Ascending aorta (tissue), 2 donors: ENCODE measurements at regions of chr2 and their contacts with region 1.

Region 1: GRCh38 chr2:195656859-195657633 is at the start of gene SLC39A10:
- DNase-seq: peak; percentile 94 to 99
- H3K4me3 ChIP-seq: peak within 1 kb of the TSS; percentile 83 to 89
- H3K27ac ChIP-seq: peak within 1 kb of the TSS; percentile 97 to 98
- H3K4me1 ChIP-seq: peaks cover 0 to 9% of the 10 kb centered on the region in 2 donors
- H3K27me3 ChIP-seq: no peaks in the 10 kb centered on the region
- CTCF ChIP-seq: peak in 1 of 3 experiments; percentile 4
- total RNA-seq, gene SLC39A10: 9.9 TPM

Region 2: GRCh38 chr2:195304310-195304709 is 352.7 kb before region 1 on chr2:
- intact Hi-C with region 1: no loop called
- DNase-seq: no peak
- H3K4me3 ChIP-seq: no peak overlapping the region
- H3K27ac ChIP-seq: no peak overlapping the region
- H3K4me1 ChIP-seq: no peaks in the 10 kb centered on the region
- H3K27me3 ChIP-seq: no peaks in the 10 kb centered on the region
- CTCF ChIP-seq: no peak

Region 3: DNA sequence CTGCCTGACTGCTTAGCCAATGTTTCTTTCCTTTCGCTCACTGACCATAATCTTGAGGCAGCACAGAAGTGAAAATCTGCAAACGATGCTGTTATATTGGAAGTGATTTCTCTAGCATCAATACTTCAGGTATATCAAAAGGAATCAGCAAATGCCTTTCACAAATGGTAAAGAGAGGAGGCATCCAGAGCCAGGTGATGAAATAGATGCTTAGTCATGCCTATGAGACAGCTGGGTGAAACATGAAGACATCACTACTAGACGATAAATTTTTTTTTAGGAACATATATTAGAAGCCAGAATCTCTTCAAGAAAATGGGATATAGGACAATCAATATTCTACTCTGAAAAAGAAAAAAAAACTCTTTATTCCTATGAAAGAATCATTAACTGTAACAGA is 249.3 kb before region 1 on chr2:
- intact Hi-C with region 1: loop called (anchors 10 kb)
- DNase-seq: no peak
- H3K4me3 ChIP-seq: no peak overlapping the region
- H3K27ac ChIP-seq: no peak overlapping the region
- H3K4me1 ChIP-seq: no peaks in the 10 kb centered on the region
- H3K27me3 ChIP-seq: no peaks in the 10 kb centered on the region
- CTCF ChIP-seq: no peak

Region 4: GRCh38 chr2:195533771-195534642 is 123.0 kb before region 1 on chr2:
- intact Hi-C with region 1: loop called (anchors 1 kb)
- DNase-seq: peak; percentile 59 to 92
- H3K4me3 ChIP-seq: peak overlapping the region in 1 of 2 donors; percentile 17
- H3K27ac ChIP-seq: peak overlapping the region; percentile 79 to 82
- H3K4me1 ChIP-seq: peaks cover 7 to 21% of the 10 kb centered on the region in 2 donors
- H3K27me3 ChIP-seq: no peaks in the 10 kb centered on the region
- CTCF ChIP-seq: no peak

Region 5: DNA sequence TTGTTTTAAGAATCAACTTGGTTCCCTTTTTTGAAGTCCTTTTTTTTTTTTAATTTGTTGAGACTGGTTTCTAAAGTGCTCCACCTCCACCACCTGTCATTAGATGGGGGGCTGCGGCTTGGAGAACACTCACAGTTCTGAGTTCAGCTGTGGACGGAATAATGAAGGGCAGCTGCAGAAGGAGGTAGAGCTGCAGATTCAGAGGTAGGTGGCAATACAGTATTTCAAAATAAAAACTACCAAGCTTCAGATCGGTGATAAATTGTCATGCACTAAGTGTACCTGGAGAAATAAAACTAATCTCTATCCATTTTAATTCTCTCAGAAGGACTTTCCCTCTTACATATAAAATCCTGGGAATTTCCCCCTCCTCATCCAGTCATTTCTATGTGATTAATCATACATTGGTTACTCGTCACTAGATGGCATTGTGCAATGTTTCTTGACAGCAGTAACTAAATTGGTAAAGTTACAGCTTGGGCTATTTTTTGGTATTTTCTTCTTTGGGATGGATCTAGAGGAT is 81.1 kb before region 1 on chr2:
- intact Hi-C with region 1: loop called (anchors 2 kb)
- DNase-seq: no peak
- H3K4me3 ChIP-seq: no peak overlapping the region
- H3K27ac ChIP-seq: no peak overlapping the region
- H3K4me1 ChIP-seq: peaks cover 0 to 15% of the 10 kb centered on the region in 2 donors
- H3K27me3 ChIP-seq: no peaks in the 10 kb centered on the region
- CTCF ChIP-seq: no peak

Region 6: DNA sequence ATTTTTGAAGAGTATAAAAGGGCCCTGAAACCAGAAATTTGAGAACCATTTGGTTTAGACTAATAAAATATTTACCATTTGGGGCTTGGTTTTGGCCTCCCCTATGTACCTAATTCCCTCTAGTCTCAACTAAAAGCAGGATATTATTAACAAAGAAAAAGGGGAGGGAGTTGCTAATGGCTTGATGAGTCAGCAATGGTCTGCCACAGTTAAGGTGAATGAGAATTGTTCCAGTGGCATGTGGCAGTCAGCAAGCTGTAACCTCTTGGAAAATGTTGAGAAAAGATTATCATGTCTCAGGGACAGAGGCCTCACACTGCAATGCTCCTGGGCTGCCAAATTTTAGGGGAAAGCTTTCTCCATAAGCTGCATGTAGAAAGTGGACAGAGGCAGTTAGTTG is 20.2 kb before region 1 on chr2:
- intact Hi-C with region 1: no loop called
- DNase-seq: no peak
- H3K4me3 ChIP-seq: no peak overlapping the region
- H3K27ac ChIP-seq: no peak overlapping the region
- H3K4me1 ChIP-seq: no peaks in the 10 kb centered on the region
- H3K27me3 ChIP-seq: no peaks in the 10 kb centered on the region
- CTCF ChIP-seq: no peak

Region 7: GRCh38 chr2:195838002-195838401 is 181.0 kb after region 1 on chr2:
- intact Hi-C with region 1: no loop called
- DNase-seq: no peak
- H3K4me3 ChIP-seq: no peak overlapping the region
- H3K27ac ChIP-seq: no peak overlapping the region
- H3K4me1 ChIP-seq: no peaks in the 10 kb centered on the region
- H3K27me3 ChIP-seq: no peaks in the 10 kb centered on the region
- CTCF ChIP-seq: no peak

Region 8: GRCh38 chr2:195923889-195924288 is 266.8 kb after region 1 on chr2:
- intact Hi-C with region 1: no loop called
- DNase-seq: no peak
- H3K4me3 ChIP-seq: no peak overlapping the region
- H3K27ac ChIP-seq: no peak overlapping the region
- H3K4me1 ChIP-seq: no peaks in the 10 kb centered on the region
- H3K27me3 ChIP-seq: no peaks in the 10 kb centered on the region
- CTCF ChIP-seq: no peak